ENCODE measurements at regions of chr1 and their contacts with region 1.

Region 1: DNA sequence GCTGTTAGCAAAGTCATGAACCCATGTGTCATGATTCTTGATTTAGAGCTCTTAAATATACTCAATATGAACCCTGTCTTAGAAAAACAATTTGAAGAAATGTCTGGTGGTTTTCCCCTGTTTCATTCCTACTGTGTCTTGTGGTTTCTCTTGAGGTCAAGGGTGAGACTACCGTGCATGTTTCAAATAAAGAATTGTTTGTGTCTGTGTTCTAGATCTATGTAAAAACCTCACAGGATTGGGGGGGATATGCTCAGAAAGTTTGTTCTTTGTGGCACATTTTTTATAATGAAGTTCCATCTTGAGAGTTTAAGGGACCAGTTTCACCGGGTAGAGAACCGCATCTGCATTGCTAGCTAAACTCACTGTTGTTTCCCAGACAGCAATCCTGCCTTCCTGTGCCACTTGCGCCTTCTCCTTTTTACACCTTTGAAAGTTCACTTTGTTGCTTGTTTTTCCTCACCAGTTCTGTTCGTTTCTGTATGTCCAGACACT is 30.9 kb upstream of the CACYBP start:
- DNase-seq: peak; percentile 26
- H3K4me3 Mint-ChIP-seq: peak overlapping the region; percentile 68
- H3K27ac Mint-ChIP-seq: peak overlapping the region; percentile 90
- H3K4me1 Mint-ChIP-seq: peaks cover 75% of the 10 kb centered on the region
- H3K27me3 Mint-ChIP-seq: no peaks in the 10 kb centered on the region

Region 2: GRCh38 chr1:174142836-174143235 is 826.0 kb before region 1 on chr1:
- CTCF ChIA-PET with region 1: no interaction called
- POLR2A ChIA-PET with region 1: no interaction called
- intact Hi-C with region 1: no loop called
- DNase-seq: no peak
- H3K4me3 Mint-ChIP-seq: no peak overlapping the region
- H3K27ac Mint-ChIP-seq: no peak overlapping the region
- H3K4me1 Mint-ChIP-seq: no peaks in the 10 kb centered on the region
- H3K27me3 Mint-ChIP-seq: peaks cover 7% of the 10 kb centered on the region

Region 3: GRCh38 chr1:174159252-174160108 is 809.3 kb before region 1 on chr1 and contains the start of gene RABGAP1L:
- CTCF ChIA-PET with region 1: no interaction called
- POLR2A ChIA-PET with region 1: no interaction called
- intact Hi-C with region 1: loop called (anchors 2 kb)
- DNase-seq: peak; percentile 95
- H3K4me3 Mint-ChIP-seq: peak within 1 kb of the TSS; percentile 99
- H3K27ac Mint-ChIP-seq: peak within 1 kb of the TSS; percentile 94
- H3K4me1 Mint-ChIP-seq: peaks cover 60% of the 10 kb centered on the region
- H3K27me3 Mint-ChIP-seq: no peaks in the 10 kb centered on the region
- total RNA-seq, gene RABGAP1L: 30.5 to 30.9 TPM

Region 4: DNA sequence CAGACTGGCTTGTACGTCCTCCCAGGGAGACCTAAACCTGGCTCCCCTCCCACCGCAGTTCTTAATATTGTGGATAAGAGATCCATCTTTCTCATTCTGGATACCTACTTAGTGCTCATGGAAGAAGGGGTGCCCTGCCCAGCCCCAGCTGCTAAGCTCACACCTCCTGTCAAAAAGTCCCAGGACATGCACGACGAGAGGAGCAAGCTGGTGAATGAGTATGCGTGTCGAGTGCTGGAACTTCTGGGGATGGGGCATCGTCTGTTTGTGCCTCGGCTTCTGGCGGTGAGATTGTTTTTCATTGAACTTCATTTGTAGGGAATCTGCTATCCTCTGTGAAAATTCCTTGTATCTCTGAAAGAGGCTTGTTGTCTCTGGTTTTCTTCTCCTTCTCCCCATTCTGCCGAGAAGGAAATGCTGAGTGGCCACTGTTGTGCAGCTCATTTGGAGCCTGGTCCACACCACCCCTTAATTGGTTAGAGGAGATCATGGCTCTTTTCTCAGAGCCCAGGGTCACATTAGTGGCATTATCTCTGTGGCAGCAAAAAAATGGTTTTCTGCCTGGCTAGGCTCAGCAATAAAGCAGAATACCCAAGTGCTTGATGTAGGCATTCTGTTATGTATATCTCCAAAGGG is 168.5 kb before region 1 on chr1:
- CTCF ChIA-PET with region 1: interaction called, 3 read pairs
- POLR2A ChIA-PET with region 1: interaction called, 3 read pairs
- intact Hi-C with region 1: loop called (anchors 1 kb)
- DNase-seq: peak; percentile 33
- H3K4me3 Mint-ChIP-seq: no peak overlapping the region
- H3K27ac Mint-ChIP-seq: no peak overlapping the region
- H3K4me1 Mint-ChIP-seq: peaks cover 5% of the 10 kb centered on the region
- H3K27me3 Mint-ChIP-seq: no peaks in the 10 kb centered on the region

Region 5: GRCh38 chr1:174874331-174875053 is 94.3 kb before region 1 on chr1:
- CTCF ChIA-PET with region 1: no interaction called
- POLR2A ChIA-PET with region 1: no interaction called
- intact Hi-C with region 1: loop called (anchors 5 kb)
- DNase-seq: peak; percentile 15
- H3K4me3 Mint-ChIP-seq: peak overlapping the region; percentile 54
- H3K27ac Mint-ChIP-seq: no peak overlapping the region
- H3K4me1 Mint-ChIP-seq: peaks cover 27% of the 10 kb centered on the region
- H3K27me3 Mint-ChIP-seq: no peaks in the 10 kb centered on the region

Region 6: GRCh38 chr1:174938281-174939007 is 30.4 kb before region 1 on chr1:
- CTCF ChIA-PET with region 1: no interaction called
- POLR2A ChIA-PET with region 1: interaction called, 4 read pairs
- intact Hi-C with region 1: loop called (anchors 1 kb)
- DNase-seq: no peak
- H3K4me3 Mint-ChIP-seq: peak overlapping the region; percentile 42
- H3K27ac Mint-ChIP-seq: no peak overlapping the region
- H3K4me1 Mint-ChIP-seq: peaks cover 11% of the 10 kb centered on the region
- H3K27me3 Mint-ChIP-seq: no peaks in the 10 kb centered on the region

Region 7: GRCh38 chr1:175023043-175023921 is 54.5 kb after region 1 on chr1 and contains the start of gene MRPS14:
- CTCF ChIA-PET with region 1: no interaction called
- POLR2A ChIA-PET with region 1: interaction called, 3 read pairs
- intact Hi-C with region 1: loop called (anchors 2 kb)
- DNase-seq: peak; percentile 99
- H3K4me3 Mint-ChIP-seq: peak within 1 kb of the TSS; percentile 94
- H3K27ac Mint-ChIP-seq: peak within 1 kb of the TSS; percentile 88
- H3K4me1 Mint-ChIP-seq: peaks cover 24% of the 10 kb centered on the region
- H3K27me3 Mint-ChIP-seq: no peaks in the 10 kb centered on the region
- total RNA-seq, gene MRPS14: 44.7 to 47.6 TPM

Measured in activated CD4-positive, alpha-beta memory T cell treated with anti-CD3 and anti-CD28 coated beads for 36 hours (primary cell).